ENCODE measurements at regions of chr4 and their contacts with region 1.

Region 1: GRCh38 chr4:119300101-119300978 is 21.6 kb downstream of the FABP2 start:
- DNase-seq: peak; percentile 80 to 95 (median 88)
- ATAC-seq: peak; percentile 93
- H3K4me3 ChIP-seq: peak overlapping the region; percentile 78
- H3K4me3 Mint-ChIP-seq: peak overlapping the region; percentile 99
- H3K27ac ChIP-seq: peak overlapping the region; percentile 85 to 89
- H3K27ac Mint-ChIP-seq: peak overlapping the region; percentile 99
- H3K4me1 ChIP-seq: peaks cover 20% of the 10 kb centered on the region
- H3K4me1 Mint-ChIP-seq: peaks cover 41% of the 10 kb centered on the region
- H3K27me3 ChIP-seq: no peaks in the 10 kb centered on the region
- H3K27me3 Mint-ChIP-seq: peaks cover 8% of the 10 kb centered on the region
- CTCF ChIP-seq: no peak

Region 2: GRCh38 chr4:118850488-118851173 is 449.7 kb before region 1 on chr4:
- CTCF ChIA-PET with region 1: no interaction called
- POLR2A ChIA-PET with region 1: no interaction called
- intact Hi-C with region 1: loop called in 1 of 2 experiments (anchors 5 kb)
- DNase-seq: peak in 10 of 14 experiments; percentile 5 to 81 (median 32)
- ATAC-seq: peak; percentile 94
- H3K4me3 ChIP-seq: peak overlapping the region; percentile 60
- H3K4me3 Mint-ChIP-seq: peak overlapping the region; percentile 93
- H3K27ac ChIP-seq: peak overlapping the region; percentile 21 to 56
- H3K27ac Mint-ChIP-seq: peak overlapping the region; percentile 89
- H3K4me1 ChIP-seq: peaks cover 10% of the 10 kb centered on the region
- H3K4me1 Mint-ChIP-seq: peaks cover 39% of the 10 kb centered on the region
- H3K27me3 ChIP-seq: no peaks in the 10 kb centered on the region
- H3K27me3 Mint-ChIP-seq: peaks cover 3% of the 10 kb centered on the region
- CTCF ChIP-seq: no peak

Region 3: DNA sequence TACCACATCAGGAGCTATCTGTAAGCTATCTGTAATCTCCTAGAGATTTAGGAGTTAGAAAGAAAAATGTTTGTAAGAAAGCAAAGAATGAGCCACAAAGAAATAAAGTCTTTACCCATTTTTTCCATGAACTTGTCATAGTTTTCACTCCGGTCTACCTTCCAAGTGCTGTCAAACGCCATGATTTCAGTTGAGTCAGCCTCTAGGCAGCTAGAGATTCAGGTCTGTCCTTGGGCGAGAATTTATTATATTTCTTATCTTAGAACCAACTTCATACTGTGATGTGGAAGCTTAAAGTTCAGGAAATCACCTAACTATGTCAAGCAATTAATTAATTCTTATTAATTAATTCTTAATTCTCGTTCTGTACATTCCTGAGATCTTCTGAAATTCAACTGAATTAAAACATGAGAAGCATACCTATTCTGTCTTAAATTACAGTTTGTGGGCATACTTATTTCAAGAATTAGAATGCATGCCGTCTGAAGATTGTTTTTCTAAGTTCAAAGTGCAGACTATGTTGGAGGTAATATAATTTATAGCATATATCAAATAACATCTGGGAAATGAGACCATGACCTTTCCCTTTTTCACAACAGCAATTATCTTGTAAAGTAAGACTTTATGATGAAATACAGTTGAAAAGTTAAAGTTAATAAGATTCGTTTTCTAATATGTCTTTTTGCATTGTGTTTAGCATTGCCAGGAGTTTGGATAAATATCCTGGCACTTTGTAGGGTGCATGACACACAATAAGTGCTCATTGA is 21.8 kb after region 1 on chr4 and contains the start of gene FABP2:
- CTCF ChIA-PET with region 1: no interaction called
- POLR2A ChIA-PET with region 1: no interaction called
- intact Hi-C with region 1: no loop called
- DNase-seq: no peak
- ATAC-seq: no peak
- H3K4me3 ChIP-seq: no peak within 1 kb of the TSS
- H3K4me3 Mint-ChIP-seq: no peak within 1 kb of the TSS
- H3K27ac ChIP-seq: no peak within 1 kb of the TSS
- H3K27ac Mint-ChIP-seq: no peak within 1 kb of the TSS
- H3K4me1 ChIP-seq: no peaks in the 10 kb centered on the region
- H3K4me1 Mint-ChIP-seq: peaks cover 4% of the 10 kb centered on the region
- H3K27me3 ChIP-seq: no peaks in the 10 kb centered on the region
- H3K27me3 Mint-ChIP-seq: peaks cover 12% of the 10 kb centered on the region
- CTCF ChIP-seq: no peak
- total RNA-seq, gene FABP2: not detected

Region 4: GRCh38 chr4:119666653-119667091 is 366.3 kb after region 1 on chr4:
- CTCF ChIA-PET with region 1: no interaction called
- POLR2A ChIA-PET with region 1: no interaction called
- intact Hi-C with region 1: no loop called
- DNase-seq: no peak
- ATAC-seq: no peak
- H3K4me3 ChIP-seq: no peak overlapping the region
- H3K4me3 Mint-ChIP-seq: no peak overlapping the region
- H3K27ac ChIP-seq: no peak overlapping the region
- H3K27ac Mint-ChIP-seq: no peak overlapping the region
- H3K4me1 ChIP-seq: no peaks in the 10 kb centered on the region
- H3K4me1 Mint-ChIP-seq: no peaks in the 10 kb centered on the region
- H3K27me3 ChIP-seq: peaks cover 0 to 9% of the 10 kb centered on the region in 2 experiments
- H3K27me3 Mint-ChIP-seq: peaks cover 31% of the 10 kb centered on the region
- CTCF ChIP-seq: no peak